ENCODE measurements at regions of chr1 and their contacts with region 1.

Region 1: GRCh38 chr1:56045477-56045876 is 533.9 kb downstream of the PLPP3 start:
- DNase-seq: no peak
- H3K4me3 ChIP-seq: no peak overlapping the region
- H3K27ac ChIP-seq: no peak overlapping the region
- H3K4me1 ChIP-seq: no peaks in the 10 kb centered on the region
- CTCF ChIP-seq: no peak

Region 2: DNA sequence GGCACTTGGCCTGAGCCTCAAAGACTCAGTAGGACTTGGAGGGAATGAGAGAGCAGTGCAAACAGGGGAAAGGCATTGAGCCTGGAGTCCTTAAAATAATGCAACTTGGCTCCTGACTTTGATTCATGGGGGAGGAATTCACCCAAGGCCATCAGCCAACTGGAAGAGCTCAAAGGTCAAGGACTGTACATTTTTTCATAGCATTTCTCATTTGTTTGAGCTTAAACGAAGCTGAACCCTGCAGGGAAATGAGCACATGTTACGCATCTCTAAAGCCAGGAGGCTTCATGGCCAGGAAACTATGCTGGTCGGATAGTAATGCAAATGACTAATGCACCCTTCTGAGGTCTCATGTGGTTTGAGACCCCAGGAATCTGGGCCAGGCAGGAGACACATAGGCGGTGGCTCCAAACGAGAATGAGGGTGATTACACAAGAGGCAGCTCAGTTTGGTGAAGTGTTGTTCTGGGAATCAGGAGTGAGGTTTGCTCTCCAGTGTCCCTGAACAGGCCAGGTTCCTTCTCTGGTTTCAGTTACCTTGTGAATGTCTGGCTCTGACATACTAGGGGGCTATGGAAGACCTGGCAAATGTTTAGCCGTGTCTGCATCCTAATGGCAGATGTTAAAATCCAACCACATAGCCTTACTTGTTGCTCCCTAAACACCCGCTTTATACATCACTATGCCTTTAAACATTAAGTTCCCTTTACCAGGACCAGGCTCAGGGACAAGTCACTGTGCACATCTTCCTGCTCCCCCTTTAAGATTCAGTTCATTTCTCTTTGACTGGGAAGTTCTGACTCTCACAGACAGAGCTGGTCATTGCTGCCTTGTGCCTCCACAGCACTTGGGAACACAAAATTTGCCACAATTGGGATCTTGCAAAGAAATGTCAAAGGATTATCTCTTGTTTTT is 326.5 kb before region 1 on chr1:
- CTCF ChIA-PET with region 1: no interaction called
- POLR2A ChIA-PET with region 1: no interaction called
- intact Hi-C with region 1: loop called (anchors 5 kb)
- DNase-seq: no peak
- H3K4me3 ChIP-seq: no peak overlapping the region
- H3K27ac ChIP-seq: no peak overlapping the region
- H3K4me1 ChIP-seq: no peaks in the 10 kb centered on the region
- CTCF ChIP-seq: no peak

Region 3: DNA sequence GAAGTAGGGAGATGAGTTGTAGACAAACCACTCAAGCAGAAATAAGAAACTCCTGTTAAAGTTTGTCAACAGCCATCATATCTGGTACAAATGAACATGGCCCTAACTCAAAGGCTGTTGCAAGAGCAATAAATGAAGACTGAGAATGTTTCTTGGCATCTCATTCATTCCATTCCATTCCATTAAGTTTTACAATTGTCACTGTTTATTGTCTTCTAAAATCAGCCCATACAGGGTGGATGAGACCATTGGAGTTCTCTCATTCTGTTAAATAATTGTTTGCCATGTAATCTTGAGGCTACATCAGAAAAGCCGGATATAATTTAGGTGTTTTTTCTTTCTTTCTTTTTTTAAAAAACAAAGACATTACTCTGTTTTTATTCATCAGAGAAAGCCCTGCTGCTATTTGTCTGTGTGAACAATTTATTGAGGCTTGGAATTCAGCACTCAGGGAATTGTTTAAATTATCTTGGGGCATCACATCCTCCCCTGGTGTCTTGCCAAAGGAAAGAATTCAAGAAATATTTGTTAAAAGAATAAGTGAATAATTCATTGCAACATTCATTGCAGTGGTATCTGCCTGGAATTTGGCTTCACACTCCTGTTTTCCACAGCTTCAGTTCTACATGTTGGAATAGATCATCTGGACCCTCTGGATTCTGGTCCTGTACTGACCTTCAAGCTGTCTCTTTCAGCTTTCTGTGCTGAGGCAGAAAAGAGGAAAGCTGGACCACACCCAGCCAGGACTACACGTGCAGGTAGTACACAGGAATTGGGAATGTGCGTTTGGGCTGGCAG is 70.6 kb before region 1 on chr1:
- CTCF ChIA-PET with region 1: no interaction called
- POLR2A ChIA-PET with region 1: no interaction called
- intact Hi-C with region 1: no loop called
- DNase-seq: no peak
- H3K4me3 ChIP-seq: no peak overlapping the region
- H3K27ac ChIP-seq: no peak overlapping the region
- H3K4me1 ChIP-seq: no peaks in the 10 kb centered on the region
- CTCF ChIP-seq: no peak

Measured in OCI-LY7 (cell line).